CD4-positive, alpha-beta T cell (primary cell): ENCODE measurements at regions of chr13 and their contacts with region 1.

Region 1: GRCh38 chr13:44050450-44051063 is 170.9 kb downstream of the LACC1 start:
- DNase-seq: peak in 3 of 14 experiments; percentile 50 to 58 (median 51)
- ATAC-seq: no peak
- H3K4me3 ChIP-seq: no peak overlapping the region
- H3K4me3 Mint-ChIP-seq: no peak overlapping the region
- H3K27ac ChIP-seq: no peak overlapping the region
- H3K27ac Mint-ChIP-seq: no peak overlapping the region
- H3K4me1 ChIP-seq: no peaks in the 10 kb centered on the region
- H3K4me1 Mint-ChIP-seq: no peaks in the 10 kb centered on the region
- H3K27me3 ChIP-seq: peaks cover 7 to 44% of the 10 kb centered on the region in 2 experiments
- H3K27me3 Mint-ChIP-seq: peaks cover 55% of the 10 kb centered on the region
- CTCF ChIP-seq: peak; percentile 70

Region 2: GRCh38 chr13:44088991-44089413 is 38.4 kb after region 1 on chr13:
- CTCF ChIA-PET with region 1: no interaction called
- POLR2A ChIA-PET with region 1: no interaction called
- intact Hi-C with region 1: loop called in 1 of 2 experiments (anchors 1 kb)
- DNase-seq: peak in 3 of 14 experiments; percentile 23 to 32 (median 26)
- ATAC-seq: peak; percentile 52
- H3K4me3 ChIP-seq: no peak overlapping the region
- H3K4me3 Mint-ChIP-seq: no peak overlapping the region
- H3K27ac ChIP-seq: no peak overlapping the region
- H3K27ac Mint-ChIP-seq: peak overlapping the region; percentile 18
- H3K4me1 ChIP-seq: peaks cover 3% of the 10 kb centered on the region
- H3K4me1 Mint-ChIP-seq: peaks cover 19% of the 10 kb centered on the region
- H3K27me3 ChIP-seq: no peaks in the 10 kb centered on the region
- H3K27me3 Mint-ChIP-seq: no peaks in the 10 kb centered on the region
- CTCF ChIP-seq: no peak

Region 3: DNA sequence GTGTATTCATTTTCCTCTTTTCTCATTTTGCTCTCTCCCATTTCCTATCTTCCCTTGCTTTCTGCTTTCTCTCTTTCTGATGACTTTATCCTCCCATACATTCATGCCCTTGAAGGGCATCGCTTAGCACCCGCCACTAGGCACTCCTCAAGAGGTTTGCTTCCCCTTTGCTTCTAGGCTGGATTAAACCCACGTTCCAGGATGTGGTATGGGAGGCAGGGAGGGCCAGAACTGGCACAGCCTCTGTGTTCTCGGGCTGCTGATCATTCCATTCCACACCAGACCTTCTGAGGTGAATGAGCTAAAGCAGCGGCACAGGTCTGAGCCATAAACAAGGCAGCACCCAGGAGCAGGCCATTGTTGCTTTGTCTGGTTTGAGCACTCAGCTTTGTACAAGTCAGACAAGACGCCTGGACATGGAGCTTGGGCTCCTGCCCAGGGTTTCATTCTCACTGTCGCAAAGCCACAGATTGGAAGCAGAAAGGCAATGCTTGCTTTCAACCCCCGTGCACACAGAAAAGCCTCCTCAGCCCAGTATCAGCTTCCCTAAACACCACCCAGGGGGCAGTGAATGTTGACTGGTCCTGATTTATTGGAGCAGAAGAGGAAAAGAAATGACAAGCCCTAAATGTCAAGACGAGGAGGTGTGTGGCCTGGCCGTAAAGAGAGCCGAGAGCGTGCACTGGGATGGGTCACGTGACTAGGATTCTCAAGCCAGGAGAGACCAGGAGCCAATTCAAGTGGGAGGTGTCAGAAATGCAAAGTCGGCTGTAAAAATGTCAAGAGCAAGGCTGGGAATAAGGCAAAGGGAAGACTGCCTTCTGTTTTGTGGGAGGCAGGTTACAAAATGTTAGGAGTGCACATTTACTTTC is 105.1 kb after region 1 on chr13:
- CTCF ChIA-PET with region 1: no interaction called
- POLR2A ChIA-PET with region 1: no interaction called
- intact Hi-C with region 1: no loop called
- DNase-seq: no peak
- ATAC-seq: no peak
- H3K4me3 ChIP-seq: no peak overlapping the region
- H3K4me3 Mint-ChIP-seq: no peak overlapping the region
- H3K27ac ChIP-seq: no peak overlapping the region
- H3K27ac Mint-ChIP-seq: no peak overlapping the region
- H3K4me1 ChIP-seq: no peaks in the 10 kb centered on the region
- H3K4me1 Mint-ChIP-seq: no peaks in the 10 kb centered on the region
- H3K27me3 ChIP-seq: peaks cover 0 to 8% of the 10 kb centered on the region in 2 experiments
- H3K27me3 Mint-ChIP-seq: peaks cover 3% of the 10 kb centered on the region
- CTCF ChIP-seq: no peak

Region 4: GRCh38 chr13:44191504-44192171 is 141.1 kb after region 1 on chr13:
- CTCF ChIA-PET with region 1: no interaction called
- POLR2A ChIA-PET with region 1: no interaction called
- intact Hi-C with region 1: loop called in 1 of 2 experiments (anchors 5 kb)
- DNase-seq: peak in 13 of 14 experiments; percentile 3 to 80 (median 23)
- ATAC-seq: peak; percentile 87
- H3K4me3 ChIP-seq: peak overlapping the region; percentile 32
- H3K4me3 Mint-ChIP-seq: peak overlapping the region; percentile 35
- H3K27ac ChIP-seq: peak overlapping the region in 1 of 2 donors; percentile 41
- H3K27ac Mint-ChIP-seq: peak overlapping the region; percentile 79
- H3K4me1 ChIP-seq: peaks cover 13% of the 10 kb centered on the region
- H3K4me1 Mint-ChIP-seq: peaks cover 31% of the 10 kb centered on the region
- H3K27me3 ChIP-seq: no peaks in the 10 kb centered on the region
- H3K27me3 Mint-ChIP-seq: no peaks in the 10 kb centered on the region
- CTCF ChIP-seq: peak; percentile 57

Region 5: DNA sequence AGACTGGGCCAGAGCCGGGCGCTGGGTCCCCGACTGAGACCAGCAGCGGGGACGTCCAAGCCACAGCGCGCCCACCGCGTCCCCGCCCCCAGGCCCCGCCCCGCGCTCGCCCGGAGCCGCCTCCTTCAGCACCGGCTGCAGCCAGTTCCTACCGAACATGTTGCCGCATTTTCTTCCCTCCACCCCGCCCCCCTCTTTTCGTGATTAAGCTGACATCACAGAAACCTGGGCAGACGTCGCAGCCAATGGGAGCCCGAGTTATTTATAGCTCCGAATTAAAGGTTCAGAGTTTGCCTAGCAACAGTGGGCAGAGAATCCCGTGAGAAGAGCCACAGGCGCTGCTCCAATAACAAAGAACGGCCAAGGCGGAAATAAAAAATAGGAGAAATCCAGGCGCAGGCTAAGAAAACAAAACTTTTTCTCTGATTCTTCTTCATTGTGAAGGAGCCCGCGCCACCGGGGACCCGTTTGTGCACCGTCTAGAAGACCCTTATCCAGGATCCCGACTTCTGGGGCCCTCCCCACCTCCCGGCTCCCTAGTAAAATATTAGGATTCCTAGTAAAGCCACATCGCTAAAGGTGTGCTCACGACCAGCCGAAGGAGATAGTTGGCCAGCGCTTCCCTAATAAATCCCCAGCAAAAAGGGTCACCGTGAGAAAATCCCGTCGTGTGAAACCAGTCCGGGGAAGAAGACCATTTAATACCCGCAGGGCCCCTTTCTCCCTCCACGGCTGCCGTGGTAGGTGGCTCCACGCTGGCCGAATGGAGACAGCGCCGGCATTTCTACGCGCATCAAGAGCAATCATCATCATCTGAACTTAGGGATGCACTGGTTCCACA is 384.8 kb after region 1 on chr13:
- CTCF ChIA-PET with region 1: interaction called, 5 read pairs
- POLR2A ChIA-PET with region 1: no interaction called
- intact Hi-C with region 1: loop called (anchors 1 to 2 kb)
- DNase-seq: peak; percentile 76 to 95 (median 80)
- ATAC-seq: peak; percentile 83
- H3K4me3 ChIP-seq: peak overlapping the region; percentile 64
- H3K4me3 Mint-ChIP-seq: peak overlapping the region; percentile 91
- H3K27ac ChIP-seq: peak overlapping the region; percentile 3 to 43
- H3K27ac Mint-ChIP-seq: peak overlapping the region; percentile 57
- H3K4me1 ChIP-seq: peaks cover 29% of the 10 kb centered on the region
- H3K4me1 Mint-ChIP-seq: peaks cover 35% of the 10 kb centered on the region
- H3K27me3 ChIP-seq: peaks cover 14 to 18% of the 10 kb centered on the region in 2 experiments
- H3K27me3 Mint-ChIP-seq: peaks cover 12% of the 10 kb centered on the region
- CTCF ChIP-seq: no peak

Region 6: GRCh38 chr13:44470638-44471562 is 420.3 kb after region 1 on chr13:
- CTCF ChIA-PET with region 1: no interaction called
- POLR2A ChIA-PET with region 1: no interaction called
- intact Hi-C with region 1: loop called in 1 of 2 experiments (anchors 1 kb)
- DNase-seq: peak in 3 of 14 experiments; percentile 28 to 53 (median 47)
- ATAC-seq: no peak
- H3K4me3 ChIP-seq: no peak overlapping the region
- H3K4me3 Mint-ChIP-seq: no peak overlapping the region
- H3K27ac ChIP-seq: no peak overlapping the region
- H3K27ac Mint-ChIP-seq: no peak overlapping the region
- H3K4me1 ChIP-seq: no peaks in the 10 kb centered on the region
- H3K4me1 Mint-ChIP-seq: no peaks in the 10 kb centered on the region
- H3K27me3 ChIP-seq: no peaks in the 10 kb centered on the region
- H3K27me3 Mint-ChIP-seq: no peaks in the 10 kb centered on the region
- CTCF ChIP-seq: peak; percentile 65